GM10248 (cell line): ENCODE measurements at regions of chrX and their contacts with region 1.

Region 1: DNA sequence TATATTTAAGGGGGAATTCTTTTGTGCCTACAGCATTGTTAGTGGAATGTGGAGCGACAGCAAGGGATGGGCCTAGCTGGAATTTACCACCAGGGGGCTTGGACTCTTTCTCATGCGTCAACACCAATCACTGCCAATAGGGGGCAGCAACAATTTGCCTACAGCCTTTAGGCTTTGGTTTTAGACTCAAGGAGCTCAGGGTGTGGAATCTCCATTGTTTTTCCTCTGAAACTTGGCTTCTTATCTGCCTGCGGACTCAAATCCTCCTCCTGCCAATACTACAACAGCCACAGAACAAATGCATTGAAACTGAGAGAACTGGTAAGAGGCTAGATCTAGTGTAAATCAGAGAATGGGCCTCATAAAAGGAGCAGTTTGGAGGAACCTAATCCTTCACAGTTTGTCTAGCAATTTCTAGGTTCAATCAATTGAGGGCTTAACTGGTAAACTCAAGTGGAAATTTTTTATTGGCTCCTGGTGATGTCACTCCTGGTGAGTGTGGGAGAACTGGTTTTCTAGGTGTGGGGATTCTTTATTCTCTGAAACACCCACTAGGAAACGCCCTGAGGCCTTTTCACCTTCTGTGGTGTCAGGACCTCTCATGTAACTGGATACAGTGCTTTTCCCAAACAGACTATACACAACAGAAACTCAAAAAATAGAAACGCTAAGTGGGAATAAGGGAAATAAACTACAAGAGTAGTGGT is 27.9 kb upstream of the TMSB4X start:
- DNase-seq: peak; percentile 53
- CTCF ChIP-seq: peak; percentile 84

Region 2: GRCh38 chrX:12370497-12370986 is 576.4 kb before region 1 on chrX:
- CTCF ChIA-PET with region 1: no interaction called
- POLR2A ChIA-PET with region 1: no interaction called
- DNase-seq: no peak
- CTCF ChIP-seq: no peak

Region 3: GRCh38 chrX:12929701-12930100 is 17.3 kb before region 1 on chrX:
- CTCF ChIA-PET with region 1: interaction called, 13 read pairs
- POLR2A ChIA-PET with region 1: no interaction called
- DNase-seq: no peak
- CTCF ChIP-seq: no peak

Region 4: DNA sequence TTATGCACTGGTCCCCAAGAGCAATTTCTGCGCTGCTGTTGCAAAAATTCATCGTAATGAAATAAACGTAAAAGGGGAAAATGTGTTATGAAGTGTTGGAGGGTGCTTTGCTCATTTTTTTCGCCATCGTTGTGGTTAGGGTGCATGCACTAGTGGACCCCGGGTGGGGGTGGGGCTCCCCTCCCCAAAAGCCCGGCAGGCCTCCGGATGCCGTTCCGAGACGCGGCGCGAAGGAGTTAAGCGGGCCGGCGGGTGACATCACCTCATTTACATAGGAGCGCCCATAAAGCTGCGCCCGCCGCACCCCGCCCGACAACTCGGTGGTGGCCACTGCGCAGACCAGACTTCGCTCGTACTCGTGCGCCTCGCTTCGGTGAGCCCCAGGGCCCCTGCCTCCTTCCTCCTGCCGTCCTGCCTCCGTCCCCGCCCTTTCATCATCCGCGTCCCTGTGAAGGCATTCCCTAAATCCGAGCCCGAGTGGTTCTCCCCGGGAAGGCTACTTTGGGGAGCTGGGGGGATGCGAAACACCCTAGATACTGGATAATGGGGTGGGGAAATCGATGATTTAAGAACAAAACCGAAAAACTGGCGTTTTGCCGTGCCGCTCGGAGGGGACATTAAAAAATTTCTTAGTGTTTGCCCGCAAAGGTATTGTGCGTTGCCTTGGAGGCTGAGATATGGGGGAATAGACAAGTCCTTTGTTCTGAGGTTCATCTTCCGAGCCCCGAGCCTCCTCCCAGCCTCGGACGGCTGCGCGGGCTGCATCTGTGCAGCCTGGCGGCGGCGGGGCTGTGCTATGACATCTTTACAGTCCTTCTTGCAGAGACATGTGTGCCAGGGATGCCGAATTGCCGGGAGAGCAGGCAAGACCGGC is 28.0 kb after region 1 on chrX and contains the start of gene TMSB4X:
- CTCF ChIA-PET with region 1: interaction called, 28 read pairs
- POLR2A ChIA-PET with region 1: interaction called, 35 read pairs
- DNase-seq: peak; percentile 63
- CTCF ChIP-seq: no peak

Region 5: GRCh38 chrX:12984629-12985319 is 37.8 kb after region 1 on chrX:
- CTCF ChIA-PET with region 1: interaction called, 11 read pairs
- POLR2A ChIA-PET with region 1: no interaction called
- DNase-seq: no peak
- CTCF ChIP-seq: no peak

Region 6: GRCh38 chrX:13087322-13088155 is 140.5 kb after region 1 on chrX:
- CTCF ChIA-PET with region 1: interaction called, 16 read pairs
- POLR2A ChIA-PET with region 1: no interaction called
- DNase-seq: peak; percentile 61
- CTCF ChIP-seq: no peak

Region 7: DNA sequence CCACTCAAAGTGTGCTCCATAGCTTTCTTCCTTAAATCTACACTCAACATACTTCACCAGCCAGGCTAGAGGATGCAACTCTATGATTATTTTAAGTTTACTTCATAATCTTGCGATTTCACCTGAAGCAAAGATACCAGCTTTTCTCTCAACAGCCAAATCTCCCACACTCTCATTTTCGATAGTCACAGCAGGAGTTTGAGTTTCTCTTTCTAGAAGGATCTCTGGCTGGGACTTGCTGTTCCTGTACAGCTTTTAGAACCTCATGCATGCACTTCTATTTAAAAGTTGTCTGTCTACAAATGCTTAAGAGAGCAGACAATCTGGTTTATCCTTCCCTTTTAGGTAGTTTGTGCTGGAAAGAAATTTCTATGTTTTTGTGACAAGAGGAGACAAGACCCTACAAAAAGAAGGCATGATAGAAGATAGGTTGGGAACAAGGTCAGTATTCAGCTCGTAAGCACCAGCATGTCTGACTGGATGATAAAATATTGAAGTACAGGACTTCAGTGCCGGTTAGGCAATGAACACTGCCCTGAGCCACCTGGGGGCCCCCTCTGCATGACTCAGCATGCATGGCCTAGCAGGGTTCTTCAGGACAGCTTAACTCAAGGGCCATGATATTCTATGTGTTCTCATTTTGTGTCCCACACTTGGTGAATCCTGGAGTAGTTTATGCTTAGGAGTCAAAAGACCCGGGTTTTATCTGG is 307.2 kb after region 1 on chrX:
- CTCF ChIA-PET with region 1: interaction called, 12 read pairs
- POLR2A ChIA-PET with region 1: no interaction called
- DNase-seq: peak; percentile 14
- CTCF ChIP-seq: peak; percentile 28

Region 8: GRCh38 chrX:13487731-13488523 is 540.9 kb after region 1 on chrX:
- CTCF ChIA-PET with region 1: interaction called, 49 read pairs
- POLR2A ChIA-PET with region 1: interaction called, 3 read pairs
- DNase-seq: peak; percentile 45
- CTCF ChIP-seq: peak; percentile 8